Mammary epithelial cell (primary cell): ENCODE measurements at regions of chr6 and their contacts with region 1.

Region 1: GRCh38 chr6:133184798-133185372 is 56.3 kb upstream of the EYA4 start:
- DNase-seq: no peak
- H3K4me3 ChIP-seq: no peak overlapping the region
- H3K27ac ChIP-seq: no peak overlapping the region
- H3K4me1 ChIP-seq: no peaks in the 10 kb centered on the region
- H3K27me3 ChIP-seq: peaks cover 7% of the 10 kb centered on the region
- CTCF ChIP-seq: peak; percentile 54

Region 2: GRCh38 chr6:132969196-132969595 is 215.7 kb before region 1 on chr6:
- CTCF ChIA-PET with region 1: no interaction called
- dilution Hi-C with region 1: no loop called
- in situ Hi-C with region 1: no loop called
- intact Hi-C with region 1: no loop called
- DNase-seq: no peak
- H3K4me3 ChIP-seq: no peak overlapping the region
- H3K27ac ChIP-seq: no peak overlapping the region
- H3K4me1 ChIP-seq: no peaks in the 10 kb centered on the region
- H3K27me3 ChIP-seq: peaks cover 5% of the 10 kb centered on the region
- CTCF ChIP-seq: no peak

Region 3: DNA sequence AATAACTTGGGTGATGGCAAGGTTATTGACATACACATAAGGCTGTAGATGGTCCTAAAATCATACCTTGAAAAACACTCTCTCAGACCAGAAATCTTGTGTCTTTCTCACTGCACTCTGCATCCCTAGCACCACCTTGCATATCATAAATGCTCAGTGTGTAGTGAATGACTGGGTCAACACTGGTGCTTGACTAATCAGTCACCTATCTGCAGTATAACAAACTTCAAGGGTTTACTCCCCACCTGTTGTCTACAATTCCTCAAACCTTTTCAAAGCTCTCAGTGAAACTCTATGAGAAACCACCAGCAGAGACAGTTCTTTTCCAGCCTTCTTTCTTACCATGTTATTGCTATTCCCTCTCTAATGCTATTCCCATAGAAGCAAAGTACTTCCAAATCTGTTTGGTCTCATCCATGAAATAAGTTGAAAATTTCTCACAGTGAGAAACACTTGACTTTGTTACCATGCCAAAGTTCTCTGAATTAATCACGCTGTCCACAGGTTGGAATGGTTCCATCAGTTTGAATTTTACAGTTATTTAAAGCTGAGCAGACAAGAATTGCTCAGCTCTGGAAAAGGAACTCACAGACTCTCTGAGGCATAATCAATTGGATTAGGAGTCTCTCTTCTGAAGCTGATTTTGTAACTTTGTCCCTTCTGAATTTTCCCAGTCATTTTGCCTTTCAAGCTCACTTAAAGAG is 48.6 kb before region 1 on chr6:
- CTCF ChIA-PET with region 1: no interaction called
- dilution Hi-C with region 1: no loop called
- in situ Hi-C with region 1: no loop called
- intact Hi-C with region 1: no loop called
- DNase-seq: no peak
- H3K4me3 ChIP-seq: no peak overlapping the region
- H3K27ac ChIP-seq: no peak overlapping the region
- H3K4me1 ChIP-seq: peaks cover 8% of the 10 kb centered on the region
- H3K27me3 ChIP-seq: no peaks in the 10 kb centered on the region
- CTCF ChIP-seq: no peak

Region 4: DNA sequence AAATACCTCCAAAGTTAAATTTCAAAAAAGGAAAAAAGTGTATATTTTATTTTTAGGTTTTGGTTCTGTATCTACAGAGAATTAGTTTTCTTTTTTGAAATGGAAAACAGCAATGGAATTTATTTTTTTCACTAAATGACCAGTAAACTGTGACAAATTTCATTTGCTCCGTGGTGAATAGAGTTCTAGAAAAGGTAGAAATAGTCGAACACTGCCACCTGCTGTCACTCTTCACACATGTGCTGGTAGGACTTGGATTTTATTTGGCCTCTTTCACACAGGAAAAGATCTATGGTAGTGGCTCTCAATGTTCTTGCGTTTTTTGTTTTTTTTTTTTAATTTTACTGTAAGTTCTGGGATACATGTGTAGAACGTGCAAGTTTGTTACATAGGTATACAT is 368.8 kb after region 1 on chr6:
- CTCF ChIA-PET with region 1: no interaction called
- dilution Hi-C with region 1: no loop called
- in situ Hi-C with region 1: no loop called
- intact Hi-C with region 1: loop called (anchors 1 kb)
- DNase-seq: peak; percentile 15
- H3K4me3 ChIP-seq: no peak overlapping the region
- H3K27ac ChIP-seq: no peak overlapping the region
- H3K4me1 ChIP-seq: no peaks in the 10 kb centered on the region
- H3K27me3 ChIP-seq: peaks cover 6% of the 10 kb centered on the region
- CTCF ChIP-seq: peak; percentile 61 to 73

Region 5: DNA sequence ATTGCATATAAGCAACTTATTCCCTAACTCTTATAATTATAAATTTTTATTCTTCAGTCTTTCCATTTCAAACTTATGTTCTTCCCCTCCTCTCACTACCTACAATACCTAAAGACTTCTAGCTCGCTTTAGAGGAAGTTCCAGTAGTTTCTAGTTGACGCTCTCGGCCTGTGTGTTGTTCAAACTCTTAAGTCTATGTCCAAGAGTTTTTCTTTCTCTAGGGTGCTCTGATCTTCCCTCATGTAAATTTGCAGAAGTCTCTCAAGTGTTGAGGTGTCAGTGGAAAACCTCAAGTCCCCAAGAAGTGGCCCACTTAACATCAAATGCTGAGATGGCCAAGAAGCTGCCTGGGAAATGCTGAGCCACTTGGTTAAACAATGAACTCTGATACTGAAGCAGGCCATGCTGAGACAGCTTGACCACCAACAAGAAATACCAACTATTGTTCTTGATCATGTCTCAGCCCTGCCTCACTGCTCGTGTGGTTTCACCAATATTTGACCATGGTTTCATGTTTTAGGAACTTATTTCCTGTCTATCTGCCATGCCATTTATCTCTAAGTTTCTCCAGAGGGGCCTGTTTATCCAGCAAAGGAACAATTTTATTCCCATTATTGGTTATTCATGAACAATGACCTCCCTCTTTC is 603.1 kb after region 1 on chr6:
- CTCF ChIA-PET with region 1: no interaction called
- dilution Hi-C with region 1: no loop called
- in situ Hi-C with region 1: no loop called
- intact Hi-C with region 1: no loop called
- DNase-seq: no peak
- H3K4me3 ChIP-seq: no peak overlapping the region
- H3K27ac ChIP-seq: no peak overlapping the region
- H3K4me1 ChIP-seq: no peaks in the 10 kb centered on the region
- H3K27me3 ChIP-seq: no peaks in the 10 kb centered on the region
- CTCF ChIP-seq: no peak